Caco-2 (cell line): ENCODE measurements at regions of chr11 and their contacts with region 1.

Region 1: GRCh38 chr11:26227296-26227695 is 104.6 kb upstream of the ANO3 start:
- DNase-seq: peak in 1 of 2 experiments; percentile 31
- H3K4me3 ChIP-seq: no peak overlapping the region
- H3K4me3 Mint-ChIP-seq: no peak overlapping the region
- H3K27ac Mint-ChIP-seq: no peak overlapping the region
- H3K4me1 ChIP-seq: no peaks in the 10 kb centered on the region
- H3K4me1 Mint-ChIP-seq: no peaks in the 10 kb centered on the region
- H3K27me3 ChIP-seq: no peaks in the 10 kb centered on the region
- H3K27me3 Mint-ChIP-seq: peaks cover 2% of the 10 kb centered on the region
- CTCF ChIP-seq: peak; percentile 22 to 38

Region 2: DNA sequence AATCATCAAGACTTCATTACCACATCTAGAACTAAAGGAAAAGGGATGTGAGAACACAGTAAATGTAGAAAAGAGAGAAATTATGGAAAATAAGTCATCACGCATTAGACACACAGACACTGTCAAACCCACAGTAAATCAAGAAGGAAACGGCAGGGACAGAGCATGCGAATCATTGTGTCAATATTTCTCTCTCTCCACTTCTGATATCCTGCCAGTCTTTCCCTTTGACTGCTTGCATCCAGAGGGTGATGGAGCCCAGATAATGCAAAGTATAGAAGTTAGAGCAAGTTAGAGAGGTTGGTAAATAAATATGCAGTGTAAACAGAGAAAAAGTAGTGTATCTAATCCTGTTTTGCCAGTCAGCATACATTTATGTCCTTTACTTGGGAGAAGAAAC is 602.2 kb before region 1 on chr11:
- CTCF ChIA-PET with region 1: no interaction called
- POLR2A ChIA-PET with region 1: no interaction called
- intact Hi-C with region 1: no loop called
- DNase-seq: no peak
- H3K4me3 ChIP-seq: no peak overlapping the region
- H3K4me3 Mint-ChIP-seq: no peak overlapping the region
- H3K27ac Mint-ChIP-seq: no peak overlapping the region
- H3K4me1 ChIP-seq: no peaks in the 10 kb centered on the region
- H3K4me1 Mint-ChIP-seq: no peaks in the 10 kb centered on the region
- H3K27me3 ChIP-seq: no peaks in the 10 kb centered on the region
- H3K27me3 Mint-ChIP-seq: no peaks in the 10 kb centered on the region
- CTCF ChIP-seq: no peak

Region 3: GRCh38 chr11:25953015-25953414 is 274.3 kb before region 1 on chr11:
- CTCF ChIA-PET with region 1: no interaction called
- POLR2A ChIA-PET with region 1: no interaction called
- intact Hi-C with region 1: no loop called
- DNase-seq: no peak
- H3K4me3 ChIP-seq: no peak overlapping the region
- H3K4me3 Mint-ChIP-seq: no peak overlapping the region
- H3K27ac Mint-ChIP-seq: no peak overlapping the region
- H3K4me1 ChIP-seq: no peaks in the 10 kb centered on the region
- H3K4me1 Mint-ChIP-seq: no peaks in the 10 kb centered on the region
- H3K27me3 ChIP-seq: no peaks in the 10 kb centered on the region
- H3K27me3 Mint-ChIP-seq: no peaks in the 10 kb centered on the region
- CTCF ChIP-seq: no peak

Region 4: GRCh38 chr11:25981998-25982397 is 245.3 kb before region 1 on chr11:
- CTCF ChIA-PET with region 1: interaction called, 12 read pairs
- POLR2A ChIA-PET with region 1: no interaction called
- intact Hi-C with region 1: loop called (anchors 1 kb)
- DNase-seq: peak in 1 of 2 experiments; percentile 59
- H3K4me3 ChIP-seq: no peak overlapping the region
- H3K4me3 Mint-ChIP-seq: no peak overlapping the region
- H3K27ac Mint-ChIP-seq: no peak overlapping the region
- H3K4me1 ChIP-seq: no peaks in the 10 kb centered on the region
- H3K4me1 Mint-ChIP-seq: no peaks in the 10 kb centered on the region
- H3K27me3 ChIP-seq: no peaks in the 10 kb centered on the region
- H3K27me3 Mint-ChIP-seq: peaks cover 8% of the 10 kb centered on the region
- CTCF ChIP-seq: peak; percentile 47 to 56

Region 5: GRCh38 chr11:26095340-26095739 is 132.0 kb before region 1 on chr11:
- CTCF ChIA-PET with region 1: no interaction called
- POLR2A ChIA-PET with region 1: no interaction called
- intact Hi-C with region 1: loop called (anchors 1 kb)
- DNase-seq: peak in 1 of 2 experiments; percentile 5
- H3K4me3 ChIP-seq: no peak overlapping the region
- H3K4me3 Mint-ChIP-seq: no peak overlapping the region
- H3K27ac Mint-ChIP-seq: no peak overlapping the region
- H3K4me1 ChIP-seq: no peaks in the 10 kb centered on the region
- H3K4me1 Mint-ChIP-seq: no peaks in the 10 kb centered on the region
- H3K27me3 ChIP-seq: 0 out of 2 replicates have a peak, but pooled peaks cover 1% of the 10 kb centered on the region
- H3K27me3 Mint-ChIP-seq: peaks cover 4% of the 10 kb centered on the region
- CTCF ChIP-seq: peak in 1 of 2 experiments; percentile 3

Region 6: DNA sequence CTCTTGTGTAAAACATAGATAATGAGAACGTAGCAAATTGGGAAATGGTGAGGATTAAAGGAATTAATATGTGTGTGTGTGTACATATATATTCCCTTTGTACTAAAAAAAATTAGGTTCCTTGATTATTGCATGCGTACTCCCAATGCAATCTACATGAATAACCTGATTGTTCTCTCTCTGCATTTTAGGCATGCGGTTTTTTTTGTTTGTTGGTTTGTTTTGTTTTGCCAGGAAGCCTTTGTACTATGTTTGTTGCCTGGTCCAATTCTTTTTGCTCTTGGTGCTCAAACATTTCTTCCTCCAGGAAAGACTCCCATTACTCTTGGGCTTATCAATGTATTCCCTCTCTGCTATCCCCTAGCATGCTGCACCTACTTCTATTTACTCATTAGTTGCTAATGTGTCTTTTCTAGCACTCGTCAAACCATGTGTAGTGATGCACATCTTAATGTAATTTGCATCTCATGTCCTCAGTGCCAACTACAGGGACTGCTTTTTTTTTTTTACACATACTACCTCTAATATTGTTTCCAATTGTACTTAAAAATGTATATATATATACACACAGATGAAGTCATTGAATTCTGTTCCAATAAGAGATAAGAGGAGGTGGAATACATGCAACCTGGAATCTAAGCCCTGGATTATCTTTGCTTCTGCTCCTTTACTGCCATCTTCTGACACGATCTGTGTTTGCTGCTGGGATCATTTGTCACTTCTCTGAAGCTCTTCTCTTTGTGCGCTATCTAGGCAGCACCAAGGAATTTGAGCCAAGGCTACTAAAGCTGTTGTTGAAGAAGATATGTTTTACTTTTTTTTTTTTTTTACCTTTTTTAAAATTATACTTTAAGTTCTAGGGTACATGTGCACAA is 92.6 kb before region 1 on chr11:
- CTCF ChIA-PET with region 1: no interaction called
- POLR2A ChIA-PET with region 1: no interaction called
- intact Hi-C with region 1: loop called (anchors 1 kb)
- DNase-seq: peak in 1 of 2 experiments; percentile 31
- H3K4me3 ChIP-seq: no peak overlapping the region
- H3K4me3 Mint-ChIP-seq: no peak overlapping the region
- H3K27ac Mint-ChIP-seq: no peak overlapping the region
- H3K4me1 ChIP-seq: no peaks in the 10 kb centered on the region
- H3K4me1 Mint-ChIP-seq: no peaks in the 10 kb centered on the region
- H3K27me3 ChIP-seq: no peaks in the 10 kb centered on the region
- H3K27me3 Mint-ChIP-seq: peaks cover 2% of the 10 kb centered on the region
- CTCF ChIP-seq: peak; percentile 24 to 49

Region 7: DNA sequence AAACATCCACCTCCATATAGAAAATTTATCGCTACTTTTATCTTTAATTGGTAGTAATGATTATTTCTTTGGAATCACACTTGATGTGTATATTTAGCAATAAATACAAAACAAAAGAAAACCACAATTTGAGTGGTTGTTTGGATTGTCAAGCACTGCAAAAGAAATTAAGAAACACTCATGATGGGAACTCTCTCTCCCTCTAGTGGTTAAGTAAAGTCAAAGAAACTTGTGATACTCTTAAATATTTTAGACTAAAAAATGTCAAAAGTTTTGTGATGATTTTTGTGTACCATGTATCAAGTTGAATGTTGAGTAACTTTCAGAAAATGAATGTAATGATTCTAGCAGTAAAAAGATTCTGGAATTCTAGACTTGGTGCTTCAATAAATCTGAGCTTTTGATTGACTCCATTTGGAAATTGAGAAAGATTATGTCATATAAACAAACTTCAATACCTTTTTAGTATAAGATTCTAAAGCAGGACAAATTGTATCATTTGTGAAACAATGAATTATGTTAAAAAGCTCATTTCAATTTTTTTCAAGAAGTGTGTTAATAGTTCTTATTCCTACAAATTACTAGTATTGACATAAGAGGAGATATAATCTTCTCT is 324.0 kb after region 1 on chr11:
- CTCF ChIA-PET with region 1: no interaction called
- POLR2A ChIA-PET with region 1: no interaction called
- intact Hi-C with region 1: no loop called
- DNase-seq: no peak
- H3K4me3 ChIP-seq: no peak overlapping the region
- H3K4me3 Mint-ChIP-seq: no peak overlapping the region
- H3K27ac Mint-ChIP-seq: no peak overlapping the region
- H3K4me1 ChIP-seq: no peaks in the 10 kb centered on the region
- H3K4me1 Mint-ChIP-seq: no peaks in the 10 kb centered on the region
- H3K27me3 ChIP-seq: no peaks in the 10 kb centered on the region
- H3K27me3 Mint-ChIP-seq: peaks cover 5% of the 10 kb centered on the region
- CTCF ChIP-seq: peak; percentile 31 to 43